ENCODE measurements at regions of chr21 and their contacts with region 1.

Region 1: DNA sequence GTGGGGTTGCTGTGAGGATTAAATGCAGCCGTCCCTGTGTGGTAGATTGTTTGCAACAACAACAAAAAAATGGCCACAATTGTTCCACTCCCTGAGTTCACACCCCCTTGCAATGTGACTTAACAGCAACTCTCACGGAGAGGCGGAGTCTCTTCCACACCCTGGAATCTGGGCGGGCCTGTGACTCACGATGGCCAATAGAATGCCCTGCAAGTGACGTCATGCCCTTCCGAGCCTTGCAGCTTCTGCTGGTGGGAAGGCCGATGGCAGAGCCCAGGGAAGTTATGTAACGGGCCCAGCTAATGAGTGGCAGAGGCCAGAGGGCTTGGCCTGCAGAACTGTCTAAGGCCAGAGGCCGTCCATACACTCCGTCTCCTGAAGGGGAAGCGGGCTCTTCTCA is 87.9 kb downstream of the RIPK4 start:
- DNase-seq: peak; percentile 95 to 97 (median 95)
- ATAC-seq: peak; percentile 97 to 98
- H3K4me3 ChIP-seq: no peak overlapping the region
- H3K27ac ChIP-seq: no peak overlapping the region
- H3K4me1 ChIP-seq: no peaks in the 10 kb centered on the region
- H3K27me3 ChIP-seq: no peaks in the 10 kb centered on the region

Region 2: GRCh38 chr21:41630249-41630648 is 48.7 kb before region 1 on chr21:
- intact Hi-C with region 1: loop called in 1 of 4 experiments (anchors 5 kb)
- DNase-seq: no peak
- ATAC-seq: no peak
- H3K4me3 ChIP-seq: no peak overlapping the region
- H3K27ac ChIP-seq: no peak overlapping the region
- H3K4me1 ChIP-seq: no peaks in the 10 kb centered on the region
- H3K27me3 ChIP-seq: no peaks in the 10 kb centered on the region